ENCODE measurements at regions of chr2 and their contacts with region 1.

Region 1: DNA sequence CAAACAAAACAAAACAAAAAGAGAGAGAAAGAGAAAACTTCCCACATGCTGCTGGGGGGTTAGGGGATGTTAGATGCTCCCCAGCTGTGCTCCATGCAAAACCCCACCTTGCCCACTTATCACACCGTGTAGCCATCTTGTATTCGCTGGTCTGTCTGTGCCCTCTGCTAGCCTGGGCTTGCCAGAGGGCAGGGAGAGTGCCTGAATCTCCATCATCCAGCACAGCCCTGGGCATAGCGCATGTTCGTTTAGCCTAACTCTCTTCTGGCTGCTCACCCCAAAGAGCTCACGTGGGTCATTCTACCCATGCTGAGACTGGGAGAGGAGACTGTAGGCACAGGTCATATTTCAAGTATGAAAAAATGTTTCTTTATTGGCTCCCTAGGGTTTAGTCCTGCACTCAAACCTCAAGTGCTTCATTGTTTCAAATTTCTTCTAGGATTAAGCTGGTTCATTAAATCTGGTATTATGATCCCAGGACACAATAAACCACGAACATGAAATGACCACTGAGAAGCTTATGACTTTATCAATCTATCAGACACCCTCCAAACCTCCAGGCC is 100.5 kb downstream of the KCNF1 start:
- DNase-seq: no peak
- H3K4me3 ChIP-seq: no peak overlapping the region
- H3K27ac ChIP-seq: no peak overlapping the region
- H3K4me1 ChIP-seq: no peaks in the 10 kb centered on the region
- H3K27me3 ChIP-seq: no peaks in the 10 kb centered on the region
- CTCF ChIP-seq: no peak
- POLR2A ChIP-seq: no peak

Region 2: DNA sequence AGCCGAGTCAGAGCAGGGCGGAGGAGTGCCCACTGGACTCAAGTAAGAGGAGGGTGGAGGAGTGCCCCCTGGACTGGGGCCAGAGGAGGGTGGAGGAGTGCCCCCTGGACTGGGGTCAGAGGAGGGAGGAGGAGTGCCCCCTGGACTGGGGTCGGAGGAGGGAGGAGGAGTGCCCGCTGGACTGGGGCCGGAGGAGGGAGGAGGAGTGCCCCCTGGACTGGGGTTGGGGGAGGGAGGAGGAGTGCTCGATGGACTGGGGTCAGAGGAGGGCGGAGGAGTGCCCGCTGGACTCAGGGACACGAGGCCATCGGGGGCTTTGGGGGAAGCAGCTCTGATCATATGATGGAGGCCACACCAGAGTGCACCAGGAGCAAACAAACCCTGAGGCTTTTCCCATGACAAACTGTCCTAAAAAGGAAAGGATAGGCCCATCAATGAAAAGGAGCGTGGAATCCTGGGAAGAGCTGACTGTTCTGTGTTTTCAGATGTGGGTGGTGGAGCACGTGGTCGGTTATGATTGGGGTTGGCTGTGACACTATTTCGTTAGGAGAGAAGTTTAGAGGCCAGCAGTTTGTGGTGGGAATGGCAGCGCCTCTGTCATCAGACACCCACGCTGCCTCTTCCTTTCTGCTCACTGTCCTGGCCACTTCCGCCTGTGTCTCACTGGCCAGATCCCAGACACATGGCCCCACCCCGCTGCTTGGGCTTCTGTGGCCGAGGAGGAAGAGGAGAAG is 734.0 kb before region 1 on chr2:
- intact Hi-C with region 1: no loop called
- DNase-seq: peak; percentile 81 to 83
- H3K4me3 ChIP-seq: no peak overlapping the region
- H3K27ac ChIP-seq: peak overlapping the region; percentile 62 to 84
- H3K4me1 ChIP-seq: no peaks in the 10 kb centered on the region
- H3K27me3 ChIP-seq: no peaks in the 10 kb centered on the region
- CTCF ChIP-seq: no peak
- POLR2A ChIP-seq: no peak

Region 3: GRCh38 chr2:10990561-10991111 is 21.6 kb before region 1 on chr2:
- intact Hi-C with region 1: loop called (anchors 1 kb)
- DNase-seq: no peak
- H3K4me3 ChIP-seq: no peak overlapping the region
- H3K27ac ChIP-seq: no peak overlapping the region
- H3K4me1 ChIP-seq: no peaks in the 10 kb centered on the region
- H3K27me3 ChIP-seq: no peaks in the 10 kb centered on the region
- CTCF ChIP-seq: no peak
- POLR2A ChIP-seq: no peak

Measured in uterus (tissue), 4 donors.